ENCODE measurements at regions of chr5 and their contacts with region 1.

Region 1: GRCh38 chr5:117615226-117615625 is 1040.6 kb upstream of the SEMA6A start:
- DNase-seq: no peak
- H3K4me3 ChIP-seq: no peak overlapping the region
- CTCF ChIP-seq: no peak
- POLR2A ChIP-seq: no peak

Region 2: GRCh38 chr5:116681334-116682013 is 933.8 kb before region 1 on chr5:
- intact Hi-C with region 1: no loop called
- DNase-seq: no peak
- H3K4me3 ChIP-seq: no peak overlapping the region
- CTCF ChIP-seq: no peak
- POLR2A ChIP-seq: no peak

Region 3: DNA sequence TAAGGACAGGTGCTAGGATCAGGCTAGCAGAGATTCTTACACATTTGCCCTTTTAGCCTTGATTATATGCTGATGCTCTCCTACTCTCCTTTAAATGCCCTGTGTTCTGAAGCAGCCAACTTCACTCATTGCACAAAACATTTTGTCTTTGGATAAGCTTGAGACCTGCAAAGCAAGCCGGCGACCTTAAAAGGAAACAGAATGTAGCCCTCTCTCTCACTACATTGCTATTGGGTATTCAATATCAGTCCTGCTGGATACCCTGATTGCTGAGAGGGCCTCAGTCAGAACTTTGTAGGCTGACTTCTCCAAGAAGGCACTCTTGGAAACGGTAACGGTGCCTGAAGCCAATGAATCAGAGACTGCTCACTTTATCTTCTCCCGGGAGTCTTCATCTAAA is 844.3 kb after region 1 on chr5:
- intact Hi-C with region 1: loop called (anchors 5 kb)
- DNase-seq: no peak
- H3K4me3 ChIP-seq: no peak overlapping the region
- CTCF ChIP-seq: no peak
- POLR2A ChIP-seq: no peak